ENCODE measurements at regions of chr17 and their contacts with region 1.

Region 1: DNA sequence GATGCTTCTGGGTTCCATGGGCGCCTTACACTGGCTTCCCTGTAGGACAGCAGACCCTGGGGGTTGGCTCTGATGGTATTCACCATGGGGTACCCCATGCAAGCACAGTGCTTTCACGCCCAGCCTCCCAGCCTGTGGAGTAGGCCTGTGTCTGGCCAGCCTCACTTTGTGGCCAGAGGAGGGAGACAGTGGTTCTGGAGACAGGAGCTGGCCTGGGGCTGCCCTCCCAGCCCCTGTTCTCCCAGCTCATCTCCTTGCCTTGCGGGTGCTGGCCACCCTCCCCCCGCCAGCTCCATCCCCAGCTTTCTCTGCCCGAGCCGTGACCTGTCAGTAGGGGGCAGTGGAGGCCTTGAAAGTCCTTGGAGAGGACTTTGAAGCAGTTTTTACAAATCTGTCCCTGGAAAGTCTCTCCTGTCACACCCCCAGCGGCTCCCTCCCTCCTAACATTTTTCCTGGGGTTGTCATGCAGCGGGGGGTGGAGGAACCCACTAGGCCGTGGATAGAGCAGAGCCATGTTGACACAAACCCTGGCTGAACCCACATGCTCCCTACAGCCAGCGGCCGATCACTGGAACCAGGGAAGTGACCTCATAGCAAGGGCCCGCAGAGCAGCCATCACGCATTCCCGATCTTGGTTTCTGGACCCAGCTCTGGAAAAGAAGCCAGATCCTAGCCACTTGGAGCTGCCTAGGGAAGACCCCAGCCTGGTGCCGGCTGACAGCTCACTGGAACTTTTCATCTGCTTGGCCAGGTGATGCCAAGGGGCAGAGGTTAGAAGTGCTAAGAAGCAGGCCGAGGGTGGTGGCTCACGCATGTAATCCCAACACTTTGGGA is 289.4 kb downstream of the SEC14L1 start:
- DNase-seq: peak; percentile 94 to 96 (median 95)
- ATAC-seq: peak; percentile 88 to 92
- H3K4me3 ChIP-seq: no peak overlapping the region
- H3K27ac ChIP-seq: peak overlapping the region; percentile 79
- H3K4me1 ChIP-seq: peaks cover 45% of the 10 kb centered on the region
- H3K27me3 ChIP-seq: no peaks in the 10 kb centered on the region

Region 2: DNA sequence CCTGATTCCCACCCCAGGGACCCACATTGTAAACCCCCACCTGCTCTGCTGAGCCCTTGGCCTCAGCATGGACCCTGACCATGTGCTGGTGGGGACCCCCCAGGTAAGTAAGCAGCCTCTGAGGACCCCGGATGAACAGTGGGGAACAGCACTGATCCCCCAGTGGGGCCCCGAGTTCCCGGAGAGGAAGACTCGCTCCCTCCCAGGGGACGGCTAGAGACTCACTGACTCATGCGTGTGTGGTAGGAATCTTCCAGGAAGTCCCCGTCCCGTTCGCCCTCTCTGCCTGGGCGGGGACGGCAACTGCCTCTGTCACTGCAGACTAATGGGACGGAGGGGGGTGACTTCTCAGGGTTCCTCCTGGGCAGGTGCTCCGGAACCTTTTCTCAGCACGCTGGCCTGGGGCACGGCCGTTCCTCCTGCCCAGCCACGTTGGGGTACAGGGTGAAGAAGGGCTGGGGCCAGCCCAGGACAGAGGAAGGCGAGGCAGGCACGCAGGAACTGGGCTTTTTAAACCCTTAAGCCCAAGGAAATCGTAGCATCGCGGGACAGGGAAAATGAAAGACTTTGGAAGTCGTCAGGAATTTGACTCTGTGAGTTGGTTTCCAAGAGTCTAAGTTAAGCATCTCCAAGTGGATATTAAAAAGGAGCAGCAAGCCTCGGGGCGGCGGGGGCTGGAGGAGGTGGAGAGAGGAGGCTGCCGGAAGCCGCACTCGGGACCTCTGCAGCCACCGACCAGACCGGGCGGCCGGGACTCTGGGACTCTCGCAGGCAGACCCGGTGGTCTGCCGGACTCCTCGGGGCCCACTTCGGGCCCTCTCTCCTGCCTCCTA is 110.7 kb before region 1 on chr17:
- intact Hi-C with region 1: loop called in 1 of 4 experiments (anchors 10 kb)
- DNase-seq: peak; percentile 89 to 91 (median 91)
- ATAC-seq: peak; percentile 54 to 67
- H3K4me3 ChIP-seq: peak overlapping the region; percentile 34
- H3K27ac ChIP-seq: peak overlapping the region; percentile 62
- H3K4me1 ChIP-seq: peaks cover 9% of the 10 kb centered on the region
- H3K27me3 ChIP-seq: no peaks in the 10 kb centered on the region

Region 3: GRCh38 chr17:77494664-77495435 is 64.7 kb after region 1 on chr17:
- intact Hi-C with region 1: loop called (anchors 2 to 10 kb)
- DNase-seq: peak; percentile 70 to 92 (median 90)
- ATAC-seq: peak; percentile 46 to 62
- H3K4me3 ChIP-seq: no peak overlapping the region
- H3K27ac ChIP-seq: no peak overlapping the region
- H3K4me1 ChIP-seq: peaks cover 5% of the 10 kb centered on the region
- H3K27me3 ChIP-seq: no peaks in the 10 kb centered on the region